ENCODE measurements at regions of chr12 and their contacts with region 1.

Region 1: DNA sequence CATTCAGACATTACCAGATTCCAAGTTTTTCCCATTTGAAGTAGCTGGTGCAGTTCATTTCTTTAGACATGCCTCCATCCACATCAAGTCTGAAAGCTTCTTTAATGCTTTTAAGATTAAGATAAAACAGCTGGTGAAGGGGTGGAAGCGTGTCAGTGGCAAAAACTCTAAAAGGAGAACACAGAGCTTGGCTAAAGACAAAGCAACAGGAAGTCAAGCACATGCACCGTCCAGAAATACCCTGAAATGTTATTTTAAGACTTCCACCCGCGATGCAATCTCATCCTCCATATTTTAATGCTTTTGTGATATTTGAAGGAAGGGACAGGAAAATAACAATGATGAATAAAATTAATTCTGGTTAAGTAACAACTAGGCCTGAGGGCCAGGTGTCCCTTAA is 31.8 kb downstream of the PPM1H start:
- DNase-seq: peak; percentile 94
- H3K4me3 ChIP-seq: no peak overlapping the region
- H3K27ac ChIP-seq: peak overlapping the region; percentile 64
- H3K4me1 ChIP-seq: peaks cover 11% of the 10 kb centered on the region
- H3K27me3 ChIP-seq: peaks cover 0 to 3% of the 10 kb centered on the region in 2 experiments
- CTCF ChIP-seq: no peak
- POLR2A ChIP-seq: no peak

Region 2: DNA sequence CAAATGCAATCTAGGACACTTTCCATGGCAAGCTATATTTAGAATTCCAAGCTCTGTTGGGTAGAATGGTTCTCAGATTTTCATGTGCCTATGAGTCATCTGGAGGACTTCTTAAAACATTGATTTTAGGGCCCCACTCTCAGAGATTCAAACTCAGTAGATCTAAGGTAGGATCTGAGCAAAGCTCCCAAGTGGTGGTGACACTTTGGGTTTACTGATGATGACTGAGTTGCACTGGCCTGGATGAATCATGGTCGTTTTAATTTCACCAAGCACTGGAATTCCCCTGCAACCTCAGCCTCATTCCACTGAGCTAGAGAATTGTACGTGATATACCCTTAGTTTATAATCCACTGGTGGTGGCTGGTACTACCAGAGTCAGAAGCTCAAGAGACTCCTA is 54.7 kb before region 1 on chr12:
- CTCF ChIA-PET with region 1: no interaction called
- POLR2A ChIA-PET with region 1: no interaction called
- dilution Hi-C with region 1: no loop called
- intact Hi-C with region 1: loop called (anchors 1 kb)
- DNase-seq: no peak
- H3K4me3 ChIP-seq: no peak overlapping the region
- H3K27ac ChIP-seq: no peak overlapping the region
- H3K4me1 ChIP-seq: no peaks in the 10 kb centered on the region
- H3K27me3 ChIP-seq: no peaks in the 10 kb centered on the region
- CTCF ChIP-seq: no peak
- POLR2A ChIP-seq: no peak

Region 3: DNA sequence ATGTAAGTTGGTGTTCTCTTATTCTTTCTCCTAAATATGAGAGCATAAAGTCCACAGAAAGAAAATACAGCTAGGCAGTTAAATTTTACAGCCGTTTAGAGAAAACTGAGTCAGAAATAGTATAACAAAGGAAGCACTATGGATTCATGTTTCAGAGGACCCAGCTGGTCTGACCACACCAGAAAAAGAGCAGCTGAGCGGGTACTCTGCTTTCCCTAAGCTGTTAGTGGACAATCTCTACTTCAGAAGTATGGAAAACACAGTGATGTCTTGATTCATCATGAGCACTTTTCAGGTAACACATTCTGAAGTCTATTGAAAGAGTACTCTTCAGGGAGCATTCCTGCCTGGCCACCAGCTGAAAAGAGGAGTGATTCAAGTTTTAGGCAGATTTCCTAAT is 19.4 kb after region 1 on chr12:
- CTCF ChIA-PET with region 1: no interaction called
- POLR2A ChIA-PET with region 1: no interaction called
- dilution Hi-C with region 1: no loop called
- intact Hi-C with region 1: no loop called
- DNase-seq: no peak
- H3K4me3 ChIP-seq: no peak overlapping the region
- H3K27ac ChIP-seq: no peak overlapping the region
- H3K4me1 ChIP-seq: peaks cover 3% of the 10 kb centered on the region
- H3K27me3 ChIP-seq: peaks cover 0 to 1% of the 10 kb centered on the region in 2 experiments
- CTCF ChIP-seq: no peak
- POLR2A ChIP-seq: no peak

Region 4: GRCh38 chr12:63313139-63313538 is 410.0 kb after region 1 on chr12:
- CTCF ChIA-PET with region 1: no interaction called
- POLR2A ChIA-PET with region 1: no interaction called
- dilution Hi-C with region 1: no loop called
- intact Hi-C with region 1: no loop called
- DNase-seq: no peak
- H3K4me3 ChIP-seq: no peak overlapping the region
- H3K27ac ChIP-seq: no peak overlapping the region
- H3K4me1 ChIP-seq: no peaks in the 10 kb centered on the region
- H3K27me3 ChIP-seq: peaks cover 0 to 2% of the 10 kb centered on the region in 2 experiments
- CTCF ChIP-seq: no peak
- POLR2A ChIP-seq: no peak

Region 5: GRCh38 chr12:64304571-64304970 is 1401.4 kb after region 1 on chr12:
- CTCF ChIA-PET with region 1: no interaction called
- POLR2A ChIA-PET with region 1: no interaction called
- dilution Hi-C with region 1: no loop called
- intact Hi-C with region 1: no loop called
- DNase-seq: no peak
- H3K4me3 ChIP-seq: no peak overlapping the region
- H3K27ac ChIP-seq: no peak overlapping the region
- H3K4me1 ChIP-seq: no peaks in the 10 kb centered on the region
- H3K27me3 ChIP-seq: peaks cover 3 to 4% of the 10 kb centered on the region in 2 experiments
- CTCF ChIP-seq: no peak
- POLR2A ChIP-seq: no peak